ENCODE measurements at regions of chr9 and their contacts with region 1.

Region 1: DNA sequence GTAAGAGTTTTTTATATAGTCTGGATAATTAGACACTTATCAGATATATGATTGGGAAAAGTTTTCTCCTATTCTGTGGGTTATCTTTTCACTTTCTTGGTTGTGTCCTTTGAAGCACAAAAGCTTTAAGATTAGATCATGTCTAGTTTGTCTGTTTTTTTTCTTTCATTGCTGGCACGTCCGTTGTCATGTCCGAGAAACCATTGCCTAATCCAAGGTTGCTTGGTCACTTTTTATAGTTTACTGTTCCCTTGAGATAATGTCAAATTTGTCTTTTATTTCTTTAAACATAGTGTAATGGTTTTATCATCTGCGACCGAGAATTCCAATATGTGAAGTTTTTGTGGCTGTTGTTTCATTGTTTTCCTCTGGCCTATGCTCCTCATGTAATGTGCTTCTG is 28.8 kb downstream of the GARNL3 start:
- DNase-seq: no peak
- H3K4me3 ChIP-seq: no peak overlapping the region
- H3K27ac ChIP-seq: no peak overlapping the region
- H3K4me1 ChIP-seq: no peaks in the 10 kb centered on the region
- H3K27me3 ChIP-seq: no peaks in the 10 kb centered on the region
- CTCF ChIP-seq: no peak
- POLR2A ChIP-seq: no peak

Region 2: GRCh38 chr9:127269440-127269839 is 23.9 kb before region 1 on chr9:
- CTCF ChIA-PET with region 1: no interaction called
- POLR2A ChIA-PET with region 1: no interaction called
- dilution Hi-C with region 1: no loop called
- intact Hi-C with region 1: no loop called
- DNase-seq: no peak
- H3K4me3 ChIP-seq: no peak overlapping the region
- H3K27ac ChIP-seq: no peak overlapping the region
- H3K4me1 ChIP-seq: no peaks in the 10 kb centered on the region
- H3K27me3 ChIP-seq: no peaks in the 10 kb centered on the region
- CTCF ChIP-seq: no peak
- POLR2A ChIP-seq: no peak

Region 3: DNA sequence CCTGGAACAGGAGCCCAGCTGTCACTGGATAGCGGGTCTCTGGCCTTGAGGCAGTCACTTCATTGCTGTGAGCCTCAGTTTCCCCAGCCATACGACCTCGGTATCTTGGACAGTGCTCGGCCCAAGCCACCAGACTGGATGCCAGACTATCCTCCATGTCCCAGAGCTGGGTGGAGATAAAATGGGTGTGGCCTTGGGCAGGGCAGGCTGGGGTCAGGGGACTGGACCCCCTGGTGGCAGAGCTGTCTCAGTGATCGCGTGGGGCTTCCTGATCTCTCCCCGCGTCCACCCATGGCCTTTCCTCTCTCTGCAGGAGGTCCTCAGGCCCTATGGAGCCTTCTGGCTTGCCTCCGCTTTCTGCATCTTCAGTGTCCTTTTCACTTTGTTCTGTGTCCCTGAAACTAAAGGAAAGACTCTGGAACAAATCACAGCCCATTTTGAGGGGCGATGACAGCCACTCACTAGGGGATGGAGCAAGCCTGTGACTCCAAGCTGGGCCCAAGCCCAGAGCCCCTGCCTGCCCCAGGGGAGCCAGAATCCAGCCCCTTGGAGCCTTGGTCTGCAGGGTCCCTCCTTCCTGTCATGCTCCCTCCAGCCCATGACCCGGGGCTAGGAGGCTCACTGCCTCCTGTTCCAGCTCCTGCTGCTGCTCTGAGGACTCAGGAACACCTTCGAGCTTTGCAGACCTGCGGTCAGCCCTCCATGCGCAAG is 113.6 kb after region 1 on chr9:
- CTCF ChIA-PET with region 1: interaction called, 3 read pairs
- POLR2A ChIA-PET with region 1: interaction called, 10 read pairs
- dilution Hi-C with region 1: no loop called
- intact Hi-C with region 1: no loop called
- DNase-seq: no peak
- H3K4me3 ChIP-seq: no peak overlapping the region
- H3K27ac ChIP-seq: no peak overlapping the region
- H3K4me1 ChIP-seq: no peaks in the 10 kb centered on the region
- H3K27me3 ChIP-seq: no peaks in the 10 kb centered on the region
- CTCF ChIP-seq: no peak
- POLR2A ChIP-seq: no peak

Measured in endothelial cell of umbilical vein (primary cell).